Kidney (tissue), 22 donors: ENCODE measurements at regions of chr19 and their contacts with region 1.

Region 1: GRCh38 chr19:38333245-38333644 is 2.4 kb upstream of the CATSPERG start:
- DNase-seq: no peak
- H3K4me3 ChIP-seq: no peak overlapping the region
- H3K27ac ChIP-seq: no peak overlapping the region
- H3K4me1 ChIP-seq: peaks cover 0 to 5% (median 0%) of the 10 kb centered on the region in 3 donors
- H3K27me3 ChIP-seq: no peaks in the 10 kb centered on the region
- CTCF ChIP-seq: no peak

Region 2: GRCh38 chr19:38245826-38246498 is 87.3 kb before region 1 on chr19:
- intact Hi-C with region 1: loop called (anchors 5 kb)
- DNase-seq: no peak
- H3K4me3 ChIP-seq: no peak overlapping the region
- H3K27ac ChIP-seq: no peak overlapping the region
- H3K4me1 ChIP-seq: peaks cover 0 to 5% (median 0%) of the 10 kb centered on the region in 3 donors
- H3K27me3 ChIP-seq: no peaks in the 10 kb centered on the region
- CTCF ChIP-seq: no peak